ENCODE measurements at regions of chr18 and their contacts with region 1.

Region 1: DNA sequence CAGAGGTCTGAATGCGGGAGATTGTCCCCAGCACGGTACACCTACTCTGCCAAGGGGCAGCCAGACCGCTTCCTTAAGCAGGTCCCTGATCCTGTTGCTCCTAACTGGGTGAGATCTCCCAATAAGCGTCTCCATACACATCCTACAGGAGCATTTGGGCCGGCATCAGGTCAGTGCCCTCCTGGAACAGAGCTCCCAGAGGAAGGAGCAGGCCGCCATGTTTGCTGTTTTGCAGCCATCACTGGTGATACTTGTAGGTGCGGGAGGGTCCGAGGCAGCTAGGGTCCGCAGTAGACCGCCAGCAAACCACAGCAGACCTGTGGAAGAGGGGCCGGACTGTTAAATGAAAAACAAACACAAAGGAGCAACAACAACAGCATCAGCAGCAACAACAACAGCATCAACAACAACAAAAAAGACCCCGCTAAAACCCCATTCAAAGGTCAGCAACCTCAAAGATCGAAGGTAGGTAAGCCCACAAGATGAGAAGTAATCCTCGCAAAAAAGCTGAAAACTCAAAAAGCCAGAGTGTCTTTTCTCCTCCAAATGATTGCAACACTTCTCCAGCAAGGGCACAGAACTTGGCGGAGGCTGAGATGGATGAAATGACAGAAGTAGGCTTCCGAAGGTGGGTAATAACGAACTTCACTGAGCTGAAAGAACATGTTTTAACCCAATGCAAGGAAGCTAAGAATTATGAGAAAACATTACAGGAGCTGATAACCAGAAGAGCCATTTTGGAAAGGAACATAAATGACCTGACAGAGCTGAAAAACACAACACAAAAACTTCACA is 79.0 kb upstream of the CDH7 start:
- DNase-seq: peak in 1 of 2 donors; percentile 19
- H3K4me3 ChIP-seq: no peak overlapping the region
- H3K27ac ChIP-seq: no peak overlapping the region
- H3K4me1 ChIP-seq: no peaks in the 10 kb centered on the region
- H3K27me3 ChIP-seq: no peaks in the 10 kb centered on the region
- CTCF ChIP-seq: no peak

Region 2: DNA sequence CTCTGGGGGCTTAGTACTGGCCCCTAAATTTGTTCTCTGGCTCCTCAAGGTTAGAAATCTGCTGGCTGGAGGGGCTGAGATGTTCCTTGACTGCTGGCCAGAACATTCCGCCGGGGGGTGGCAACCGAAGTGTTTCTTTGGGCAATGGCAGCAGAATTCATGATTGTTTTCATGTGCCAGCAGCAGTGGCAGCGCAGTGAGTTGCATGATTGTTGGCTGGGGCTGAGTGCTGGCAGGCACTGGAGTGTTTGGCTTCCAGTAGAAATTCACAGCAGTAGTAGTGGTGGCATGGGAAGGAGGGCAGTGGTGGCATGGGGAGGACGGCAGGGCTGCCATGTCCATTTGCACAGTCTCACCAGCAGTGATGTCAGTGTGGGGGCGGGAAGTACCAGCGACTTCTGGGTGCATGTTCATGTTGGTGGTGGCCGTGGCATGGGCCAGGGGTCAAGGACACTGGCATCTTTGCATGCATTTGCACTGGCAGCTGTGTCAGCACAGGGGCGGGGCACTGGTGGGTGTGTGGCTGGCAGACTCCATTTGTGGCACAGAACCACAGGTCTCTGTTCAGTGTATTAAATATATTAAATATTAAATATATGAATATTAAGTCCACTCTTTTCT is 51.6 kb before region 1 on chr18:
- intact Hi-C with region 1: no loop called
- DNase-seq: no peak
- H3K4me3 ChIP-seq: no peak overlapping the region
- H3K27ac ChIP-seq: no peak overlapping the region
- H3K4me1 ChIP-seq: no peaks in the 10 kb centered on the region
- H3K27me3 ChIP-seq: no peaks in the 10 kb centered on the region
- CTCF ChIP-seq: no peak

Region 3: DNA sequence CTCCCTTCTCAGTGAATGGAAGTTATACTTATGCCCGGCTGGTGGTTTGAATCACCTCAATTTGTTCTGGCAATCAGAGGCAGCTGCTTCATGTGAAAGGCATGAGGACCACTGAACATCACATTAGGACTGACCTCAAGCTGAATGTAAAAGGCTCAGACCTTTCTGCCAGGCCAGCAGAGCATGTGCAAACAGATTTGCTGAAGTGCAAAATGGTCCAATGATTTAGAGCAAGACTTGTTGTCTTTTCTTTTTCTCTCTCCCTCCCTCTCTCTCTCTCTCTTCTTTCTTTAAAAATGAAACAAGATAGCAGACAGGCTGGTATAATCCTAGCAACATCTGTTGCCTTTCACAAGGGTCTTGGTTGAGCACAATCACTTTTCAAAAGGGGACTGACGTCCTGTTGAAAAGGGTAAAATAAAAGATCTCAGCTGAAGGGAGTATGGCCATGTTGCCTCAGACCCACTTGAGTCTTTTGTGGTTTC is 65.7 kb after region 1 on chr18:
- intact Hi-C with region 1: loop called (anchors 10 kb)
- DNase-seq: no peak
- H3K4me3 ChIP-seq: no peak overlapping the region
- H3K27ac ChIP-seq: no peak overlapping the region
- H3K4me1 ChIP-seq: no peaks in the 10 kb centered on the region
- H3K27me3 ChIP-seq: no peaks in the 10 kb centered on the region
- CTCF ChIP-seq: no peak